ENCODE measurements at regions of chr6 and their contacts with region 1.

Region 1: DNA sequence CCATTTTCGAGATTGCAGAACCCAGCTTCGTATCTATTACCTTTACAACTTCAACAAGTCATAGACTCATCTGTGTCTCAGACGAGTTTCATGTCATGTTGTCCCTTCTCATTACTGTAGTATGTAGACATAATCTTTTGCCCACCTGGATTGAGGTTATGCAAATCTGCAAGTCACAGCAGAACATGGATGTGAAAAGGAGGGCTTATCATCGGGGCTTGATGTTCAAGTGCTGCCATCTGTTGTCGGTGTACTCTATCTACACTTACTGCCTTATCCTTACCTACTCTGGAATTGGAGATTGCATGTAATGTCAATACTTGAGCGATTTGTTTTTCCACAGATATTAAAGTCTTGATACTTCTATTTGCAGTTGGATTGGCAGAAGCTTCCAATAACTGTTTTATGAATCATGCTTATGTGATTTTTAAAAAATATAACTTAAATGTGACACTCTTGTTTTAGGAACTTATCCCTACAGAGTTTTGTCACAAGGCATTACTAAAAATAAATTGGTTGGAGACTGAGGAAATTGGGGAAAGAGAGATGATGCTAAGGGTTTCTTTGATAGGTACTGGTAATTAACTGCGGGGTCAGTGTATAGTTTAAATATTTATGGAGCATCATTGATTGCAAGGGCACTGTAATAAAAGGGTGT is 3.0 kb upstream of the GOPC start:
- DNase-seq: no peak
- ATAC-seq: peak; percentile 30

Region 2: GRCh38 chr6:117346142-117346930 is 259.0 kb before region 1 on chr6:
- intact Hi-C with region 1: loop called (anchors 5 kb)
- DNase-seq: no peak
- ATAC-seq: no peak

Region 3: DNA sequence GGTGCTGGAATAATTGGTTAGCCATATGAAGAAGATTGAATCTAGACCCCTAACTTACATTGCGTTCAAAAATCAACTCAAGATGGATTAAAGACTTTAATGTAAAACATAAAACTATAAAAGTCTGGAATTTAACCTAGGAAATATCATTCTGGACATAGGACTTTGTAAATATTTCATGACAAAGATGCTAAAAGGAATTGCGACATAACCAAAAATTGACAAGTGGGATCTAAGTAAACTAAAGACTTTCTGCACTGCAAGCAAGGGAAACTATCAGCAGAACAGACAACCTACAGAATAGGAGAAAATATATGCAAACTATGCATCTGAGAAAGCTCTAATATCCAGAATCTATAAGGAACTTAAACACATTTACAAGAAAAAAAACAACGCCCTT is 256.2 kb after region 1 on chr6:
- intact Hi-C with region 1: no loop called
- DNase-seq: no peak
- ATAC-seq: no peak

Region 4: GRCh38 chr6:118810420-118811027 is 1205.2 kb after region 1 on chr6:
- intact Hi-C with region 1: no loop called
- DNase-seq: no peak
- ATAC-seq: no peak